Panc1 (cell line): ENCODE measurements at regions of chr1 and their contacts with region 1.

Region 1: DNA sequence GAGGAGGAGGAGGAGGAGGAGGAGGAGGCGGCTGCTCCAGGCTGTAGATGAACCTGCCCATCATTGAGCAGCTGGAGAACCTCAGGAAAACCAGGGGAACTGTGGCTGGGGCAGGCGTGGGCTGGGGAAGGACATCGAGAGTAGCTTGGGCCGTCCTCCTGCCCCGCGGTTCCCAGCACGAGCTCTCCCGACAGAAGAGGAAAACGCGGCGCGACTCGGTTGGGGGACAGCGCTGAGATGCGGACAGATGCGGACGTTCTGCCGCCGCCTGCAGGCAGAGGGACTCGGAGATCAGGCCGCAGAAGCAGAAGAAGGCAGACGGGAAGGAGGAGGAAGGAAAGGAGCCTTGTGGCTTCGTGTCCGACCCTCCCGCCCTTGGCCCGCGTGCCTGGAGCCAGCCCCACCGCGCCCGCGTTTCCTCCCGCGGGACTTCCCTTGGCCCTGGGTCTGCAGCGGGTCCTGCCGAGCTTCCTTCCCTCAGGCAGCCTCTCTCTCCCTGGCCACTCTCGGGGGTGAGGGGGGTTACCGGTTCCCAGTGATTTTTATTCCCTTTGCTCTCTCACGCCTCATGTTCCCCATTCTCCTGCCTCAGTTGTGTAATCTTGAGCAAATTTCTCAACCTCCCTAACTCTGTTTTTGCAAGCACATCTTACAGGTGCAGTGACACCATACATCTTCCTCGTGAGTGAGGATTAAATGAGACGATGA is 1.7 kb upstream of the TNFRSF9 start:
- DNase-seq: no peak
- ATAC-seq: peak; percentile 90
- H3K4me3 ChIP-seq: peak overlapping the region; percentile 17 to 47
- H3K27ac ChIP-seq: no peak overlapping the region
- H3K4me1 ChIP-seq: 0 out of 2 replicates have a peak, but pooled peaks cover 3% of the 10 kb centered on the region
- H3K27me3 ChIP-seq: peaks cover 5% of the 10 kb centered on the region
- CTCF ChIP-seq: peak; percentile 60; the same call in 1 of the 2 replicates

Region 2: GRCh38 chr1:7795406-7795805 is 147.0 kb before region 1 on chr1:
- CTCF ChIA-PET with region 1: interaction called, 14 read pairs
- POLR2A ChIA-PET with region 1: no interaction called
- in situ Hi-C with region 1: no loop called
- intact Hi-C with region 1: no loop called
- DNase-seq: no peak
- ATAC-seq: no peak
- H3K4me3 ChIP-seq: no peak overlapping the region
- H3K27ac ChIP-seq: no peak overlapping the region
- H3K4me1 ChIP-seq: no peaks in the 10 kb centered on the region
- H3K27me3 ChIP-seq: no peaks in the 10 kb centered on the region
- CTCF ChIP-seq: no peak

Region 3: DNA sequence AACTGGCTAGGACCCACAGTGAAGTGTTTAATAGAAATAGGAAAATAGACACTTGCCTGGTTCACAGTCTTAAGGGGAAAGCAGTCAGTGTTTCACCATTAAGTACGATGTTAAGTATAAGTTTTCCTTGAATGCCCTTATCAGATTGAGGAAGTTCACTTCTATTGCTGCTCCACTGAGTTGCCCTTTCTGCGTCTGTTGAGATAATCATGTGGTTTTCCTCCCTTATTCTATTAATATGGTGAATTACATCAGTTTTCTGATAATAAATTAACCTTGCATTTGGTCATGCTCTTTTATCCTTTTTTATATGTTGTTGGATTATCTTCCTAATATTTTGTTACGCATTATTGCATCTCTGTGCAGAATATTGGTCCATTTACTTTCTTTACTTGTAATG is 110.9 kb before region 1 on chr1:
- CTCF ChIA-PET with region 1: no interaction called
- POLR2A ChIA-PET with region 1: no interaction called
- in situ Hi-C with region 1: no loop called
- intact Hi-C with region 1: no loop called
- DNase-seq: no peak
- ATAC-seq: no peak
- H3K4me3 ChIP-seq: no peak overlapping the region
- H3K27ac ChIP-seq: no peak overlapping the region
- H3K4me1 ChIP-seq: no peaks in the 10 kb centered on the region
- H3K27me3 ChIP-seq: no peaks in the 10 kb centered on the region
- CTCF ChIP-seq: no peak

Region 4: GRCh38 chr1:7912743-7913557 is 29.4 kb before region 1 on chr1:
- CTCF ChIA-PET with region 1: interaction called, 11 read pairs
- POLR2A ChIA-PET with region 1: no interaction called
- in situ Hi-C with region 1: no loop called
- intact Hi-C with region 1: no loop called
- DNase-seq: no peak
- ATAC-seq: peak; percentile 70; the same call in 1 of the 2 replicates
- H3K4me3 ChIP-seq: peak overlapping the region in 1 of 2 experiments; percentile 29; a peak in 3 of 4 replicates
- H3K27ac ChIP-seq: no peak overlapping the region
- H3K4me1 ChIP-seq: peaks cover 6% of the 10 kb centered on the region; the same call in 1 of the 2 replicates
- H3K27me3 ChIP-seq: no peaks in the 10 kb centered on the region
- CTCF ChIP-seq: no peak